Right cardiac atrium (tissue), 5 donors: ENCODE measurements at regions of chr12 and their contacts with region 1.

Region 1: GRCh38 chr12:24039113-24039525 is 89.6 kb upstream of the SOX5 start:
- DNase-seq: no peak
- ATAC-seq: peak in 1 of 2 donors; percentile 65
- H3K4me3 ChIP-seq: no peak overlapping the region
- H3K27ac ChIP-seq: no peak overlapping the region
- H3K4me1 ChIP-seq: no peaks in the 10 kb centered on the region
- H3K27me3 ChIP-seq: no peaks in the 10 kb centered on the region

Region 2: DNA sequence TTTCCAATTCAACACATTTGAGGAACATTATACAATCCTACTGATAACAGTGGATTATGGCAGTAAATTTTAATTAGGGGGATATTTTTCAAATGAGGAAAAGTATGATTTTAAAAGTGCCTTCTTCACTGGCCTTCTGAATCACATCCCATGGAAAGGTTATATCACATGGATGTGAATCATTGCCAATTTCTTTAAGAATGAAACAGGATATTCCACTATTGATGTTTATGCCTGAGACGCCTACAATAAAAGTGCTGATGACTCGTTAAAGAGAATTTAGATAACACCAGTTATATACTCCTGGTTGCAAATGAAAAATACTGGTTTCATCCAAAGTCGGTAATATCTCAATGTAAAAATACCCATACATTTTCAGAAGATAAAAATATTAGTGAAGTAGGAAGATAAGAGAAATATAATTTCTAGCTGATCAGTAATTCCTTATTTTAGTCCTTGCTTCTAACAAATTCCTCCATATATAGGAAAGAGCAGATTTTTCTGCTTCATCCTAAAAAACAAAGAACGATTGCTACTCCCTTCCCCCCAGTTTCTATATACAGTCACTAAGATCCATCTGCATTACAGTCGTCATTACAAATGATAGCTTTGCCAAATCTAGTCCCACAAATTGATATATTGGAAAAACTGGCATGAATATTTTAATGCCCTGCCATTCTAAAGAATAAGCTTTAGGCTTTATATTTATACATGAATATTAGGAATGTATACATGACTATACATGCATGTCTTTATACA is 49.8 kb after region 1 on chr12:
- intact Hi-C with region 1: loop called in 1 of 4 experiments (anchors 5 kb)
- DNase-seq: no peak
- ATAC-seq: no peak
- H3K4me3 ChIP-seq: no peak overlapping the region
- H3K27ac ChIP-seq: no peak overlapping the region
- H3K4me1 ChIP-seq: no peaks in the 10 kb centered on the region
- H3K27me3 ChIP-seq: no peaks in the 10 kb centered on the region